ENCODE measurements at regions of chr18 and their contacts with region 1.

Region 1: GRCh38 chr18:57961876-57962505 is 82.0 kb upstream of the NEDD4L start:
- H3K4me3 Mint-ChIP-seq: no peak overlapping the region
- H3K27ac Mint-ChIP-seq: no peak overlapping the region
- H3K4me1 Mint-ChIP-seq: no peaks in the 10 kb centered on the region
- H3K27me3 Mint-ChIP-seq: peaks cover 7% of the 10 kb centered on the region

Region 2: DNA sequence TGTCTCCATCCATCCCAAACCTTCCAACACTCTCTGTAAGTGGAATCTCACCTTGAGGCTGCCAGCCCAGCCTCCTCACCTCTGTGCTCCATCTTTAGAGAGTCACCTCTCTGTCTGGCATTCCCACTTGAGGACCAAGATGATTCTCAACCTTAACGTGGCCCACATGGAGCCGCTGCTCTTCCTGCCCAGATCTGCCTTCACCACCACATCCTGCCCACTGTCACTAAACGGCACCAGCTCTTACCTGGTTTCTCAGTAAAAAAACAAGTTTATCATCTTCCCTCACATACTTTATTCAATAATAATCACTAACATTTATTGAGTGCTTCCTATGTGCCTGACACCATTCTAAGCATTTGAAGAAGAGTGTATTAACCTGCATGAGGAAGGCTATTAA is 162.5 kb after region 1 on chr18:
- intact Hi-C with region 1: loop called (anchors 5 kb)
- H3K4me3 Mint-ChIP-seq: no peak overlapping the region
- H3K27ac Mint-ChIP-seq: no peak overlapping the region
- H3K4me1 Mint-ChIP-seq: no peaks in the 10 kb centered on the region
- H3K27me3 Mint-ChIP-seq: peaks cover 1% of the 10 kb centered on the region

Measured in dendritic cell treated with granulocyte-macrophage colony-stimulating factor and Interleukin-4, amounts not matched to agents 40 ng/mL and 50 ng/mL, for 4 days (primary cell).